ENCODE measurements at regions of chr12 and their contacts with region 1.

Region 1: DNA sequence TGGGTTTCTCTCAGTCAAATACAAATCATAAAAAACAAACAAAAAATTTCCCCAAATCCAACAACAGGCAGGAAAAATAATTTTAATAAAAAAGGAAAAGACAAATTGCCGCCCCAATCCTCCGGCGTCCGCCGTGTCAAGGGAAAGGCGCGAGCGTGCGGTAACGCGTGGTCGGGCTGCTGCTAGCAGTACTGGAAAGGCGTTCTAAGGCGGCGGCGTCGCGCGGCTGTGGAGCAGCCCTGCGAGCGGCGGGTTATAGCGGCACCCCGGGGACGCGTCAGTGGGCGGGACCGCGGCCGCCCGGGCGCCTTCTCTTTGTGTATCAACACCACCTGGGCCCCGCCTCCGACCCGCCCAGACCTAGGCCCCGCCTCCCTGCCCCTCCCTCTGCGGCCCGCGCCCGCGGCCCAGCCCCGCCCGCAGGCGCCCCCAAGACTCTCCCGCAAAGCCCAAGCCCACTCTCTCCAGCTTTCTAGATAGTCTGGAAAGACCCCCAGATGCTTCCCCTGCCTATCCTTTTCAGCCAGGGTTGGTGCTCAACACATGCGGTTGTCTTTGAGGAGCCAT is at the start of gene SLC38A2:
- DNase-seq: peak; percentile 98 to 99
- H3K4me3 ChIP-seq: peak within 1 kb of the TSS; percentile 88 to 99
- H3K27ac ChIP-seq: peak within 1 kb of the TSS; percentile 96
- H3K4me1 ChIP-seq: peaks cover 2 to 40% (median 25%) of the 10 kb centered on the region in 4 donors
- H3K27me3 ChIP-seq: no peaks in the 10 kb centered on the region
- CTCF ChIP-seq: no peak

Region 2: DNA sequence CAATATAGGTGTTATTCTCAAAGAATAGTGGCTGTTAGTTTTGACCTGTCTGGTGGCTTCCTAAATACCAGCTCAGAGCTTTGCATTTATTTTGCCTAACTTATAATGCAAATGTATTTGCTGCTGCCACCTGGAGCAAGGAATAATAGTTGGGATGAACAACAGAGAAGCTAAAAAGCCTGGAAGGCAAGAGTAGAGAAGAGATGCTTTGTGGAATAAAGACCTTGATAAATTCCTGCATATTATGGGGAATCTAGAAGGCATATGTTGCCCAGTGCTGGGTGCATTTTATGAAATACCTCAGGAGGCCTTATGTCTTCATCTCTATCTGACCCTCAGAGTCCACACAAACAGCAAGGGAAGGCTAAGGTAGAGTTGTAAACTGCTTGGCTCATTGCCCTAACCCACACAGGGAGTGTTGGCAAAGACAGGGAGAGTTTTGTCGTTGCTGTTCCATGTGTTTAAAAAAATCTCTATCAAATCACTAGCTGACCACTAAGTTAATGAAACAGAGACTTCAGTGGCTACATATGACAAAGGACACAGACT is 328.6 kb before region 1 on chr12:
- intact Hi-C with region 1: no loop called
- DNase-seq: no peak
- H3K4me3 ChIP-seq: no peak overlapping the region
- H3K27ac ChIP-seq: no peak overlapping the region
- H3K4me1 ChIP-seq: no peaks in the 10 kb centered on the region
- H3K27me3 ChIP-seq: no peaks in the 10 kb centered on the region
- CTCF ChIP-seq: no peak

Region 3: DNA sequence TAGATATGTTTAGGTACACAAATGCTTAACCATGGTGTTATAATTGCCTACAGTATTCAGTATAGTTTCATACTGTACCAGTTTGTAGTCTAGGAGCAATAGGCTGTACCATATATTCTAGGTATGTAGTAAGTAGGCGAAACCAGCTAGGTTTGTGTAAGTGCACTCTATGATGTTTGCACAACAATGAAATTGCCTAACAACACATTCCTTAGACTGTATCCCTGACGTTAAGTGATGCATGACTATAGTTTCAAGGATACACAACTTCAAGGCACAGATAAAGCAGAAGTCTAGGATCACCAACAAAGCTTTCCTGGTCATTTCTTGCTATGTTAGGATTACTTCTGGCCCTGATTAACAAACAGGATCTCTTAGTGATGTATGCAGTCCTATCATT is 238.9 kb before region 1 on chr12:
- intact Hi-C with region 1: no loop called
- DNase-seq: no peak
- H3K4me3 ChIP-seq: no peak overlapping the region
- H3K27ac ChIP-seq: no peak overlapping the region
- H3K4me1 ChIP-seq: peaks cover 0 to 4% (median 0%) of the 10 kb centered on the region in 4 donors
- H3K27me3 ChIP-seq: no peaks in the 10 kb centered on the region
- CTCF ChIP-seq: no peak

Region 4: GRCh38 chr12:46153268-46153872 is 219.3 kb before region 1 on chr12:
- intact Hi-C with region 1: loop called (anchors 10 kb)
- DNase-seq: no peak
- H3K4me3 ChIP-seq: no peak overlapping the region
- H3K27ac ChIP-seq: peak overlapping the region; percentile 2 to 34
- H3K4me1 ChIP-seq: peaks cover 0 to 26% (median 6%) of the 10 kb centered on the region in 4 donors
- H3K27me3 ChIP-seq: no peaks in the 10 kb centered on the region
- CTCF ChIP-seq: peak; percentile 49 to 65

Region 5: DNA sequence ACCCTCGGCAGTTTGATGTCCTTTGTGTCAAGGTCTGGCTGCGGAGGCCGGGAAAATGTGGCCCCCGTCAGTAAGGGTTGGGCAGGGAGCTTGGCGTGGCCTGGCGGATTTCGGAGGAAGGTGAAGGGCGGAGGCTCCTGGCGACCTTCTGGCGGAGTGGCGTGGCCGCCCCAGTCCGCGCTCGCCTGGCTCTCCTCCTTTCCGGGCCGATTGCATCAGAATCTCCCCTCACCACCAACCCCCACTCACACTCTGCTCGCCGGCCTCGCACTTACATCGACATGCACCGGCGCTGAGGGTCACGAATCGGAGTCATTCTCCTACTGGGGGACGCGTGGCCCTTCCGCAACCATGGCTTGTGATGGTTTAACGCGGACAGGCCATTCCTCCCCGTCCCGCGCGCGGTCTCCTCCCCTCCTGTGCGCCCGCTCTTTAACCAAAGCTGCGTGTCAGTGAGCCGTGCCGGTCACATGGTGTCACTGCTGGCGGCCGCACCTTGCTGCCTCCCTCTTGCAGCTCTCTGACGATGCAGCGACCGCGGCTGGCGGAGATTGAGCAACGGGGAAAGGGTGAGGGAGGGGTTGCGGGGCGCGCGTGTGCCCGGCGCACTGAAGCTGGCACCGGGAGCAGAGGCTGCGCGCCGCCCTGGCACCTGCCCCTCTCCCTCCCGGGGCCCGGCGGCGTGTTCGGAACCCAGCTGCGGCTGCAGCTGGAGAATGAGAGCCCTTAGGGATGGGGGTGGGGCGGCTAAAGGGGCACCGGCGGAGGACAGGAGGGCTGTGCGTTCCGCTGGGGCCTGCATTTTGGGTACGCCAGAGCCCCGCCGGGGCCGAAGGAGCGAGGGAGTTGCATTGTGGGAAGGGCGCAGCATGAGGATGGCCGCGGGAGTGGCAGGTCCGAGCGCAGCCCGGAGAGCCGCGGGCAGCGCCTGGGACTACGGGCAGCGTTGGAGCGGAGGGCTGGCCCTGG is 103.8 kb before region 1 on chr12 and contains the start of gene SLC38A1:
- intact Hi-C with region 1: loop called (anchors 5 kb)
- DNase-seq: peak; percentile 86 to 95
- H3K4me3 ChIP-seq: peak within 1 kb of the TSS; percentile 70 to 76
- H3K27ac ChIP-seq: peak within 1 kb of the TSS; percentile 88 to 91
- H3K4me1 ChIP-seq: peaks cover 0 to 33% (median 14%) of the 10 kb centered on the region in 4 donors
- H3K27me3 ChIP-seq: no peaks in the 10 kb centered on the region
- CTCF ChIP-seq: no peak

Region 6: GRCh38 chr12:46342562-46343033 is 30.0 kb before region 1 on chr12:
- intact Hi-C with region 1: no loop called
- DNase-seq: peak in 1 of 2 donors; percentile 63
- H3K4me3 ChIP-seq: no peak overlapping the region
- H3K27ac ChIP-seq: peak overlapping the region; percentile 8 to 49
- H3K4me1 ChIP-seq: peaks cover 0 to 17% (median 9%) of the 10 kb centered on the region in 4 donors
- H3K27me3 ChIP-seq: no peaks in the 10 kb centered on the region
- CTCF ChIP-seq: peak; percentile 48 to 57

Region 7: DNA sequence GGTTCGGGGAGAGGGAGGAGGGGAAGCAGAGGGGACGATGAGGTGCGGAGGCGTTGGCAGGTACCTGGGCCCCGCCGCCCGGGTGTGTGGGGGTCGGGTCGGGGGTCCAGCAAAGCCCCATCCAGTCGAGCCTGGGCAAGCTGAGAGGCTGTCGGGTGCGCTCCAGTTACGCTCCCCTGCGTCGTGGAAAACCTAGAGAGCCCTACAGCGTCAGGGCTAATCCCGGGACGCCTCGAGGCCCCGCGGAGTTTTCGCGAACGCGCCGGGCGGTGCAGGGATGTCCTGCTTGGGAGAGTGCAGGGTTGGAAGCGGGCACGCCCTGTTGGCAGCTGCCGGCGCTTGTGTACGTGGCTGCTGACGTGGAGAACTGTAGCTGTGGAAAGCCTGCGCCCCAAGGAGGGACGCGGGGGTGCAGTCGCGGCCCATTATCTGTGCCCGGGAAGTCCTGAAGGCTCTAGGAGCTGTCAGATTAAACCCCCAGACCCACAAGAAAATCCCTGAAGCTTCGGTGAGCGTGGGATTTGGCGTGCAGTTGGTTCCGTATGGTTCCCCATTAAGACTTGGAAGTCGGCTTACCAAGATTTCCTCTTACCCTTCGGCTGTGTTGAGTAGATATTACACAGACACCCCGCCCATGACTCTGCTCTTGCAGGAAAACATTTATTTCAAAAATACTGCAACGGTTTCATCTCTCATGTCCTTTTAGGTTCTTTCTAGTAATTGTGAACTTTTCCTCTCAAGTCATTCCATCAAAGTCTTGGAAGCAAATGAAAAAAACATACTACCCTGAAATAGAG is 11.2 kb after region 1 on chr12:
- intact Hi-C with region 1: loop called (anchors 2 kb)
- DNase-seq: peak; percentile 94 to 97
- H3K4me3 ChIP-seq: peak overlapping the region; percentile 79 to 84
- H3K27ac ChIP-seq: peak overlapping the region; percentile 98 to 99
- H3K4me1 ChIP-seq: peaks cover 0 to 62% (median 49%) of the 10 kb centered on the region in 4 donors
- H3K27me3 ChIP-seq: no peaks in the 10 kb centered on the region
- CTCF ChIP-seq: no peak

Region 8: GRCh38 chr12:46507766-46508165 is 135.1 kb after region 1 on chr12:
- intact Hi-C with region 1: no loop called
- DNase-seq: no peak
- H3K4me3 ChIP-seq: no peak overlapping the region
- H3K27ac ChIP-seq: no peak overlapping the region
- H3K4me1 ChIP-seq: no peaks in the 10 kb centered on the region
- H3K27me3 ChIP-seq: no peaks in the 10 kb centered on the region
- CTCF ChIP-seq: no peak

Region 9: DNA sequence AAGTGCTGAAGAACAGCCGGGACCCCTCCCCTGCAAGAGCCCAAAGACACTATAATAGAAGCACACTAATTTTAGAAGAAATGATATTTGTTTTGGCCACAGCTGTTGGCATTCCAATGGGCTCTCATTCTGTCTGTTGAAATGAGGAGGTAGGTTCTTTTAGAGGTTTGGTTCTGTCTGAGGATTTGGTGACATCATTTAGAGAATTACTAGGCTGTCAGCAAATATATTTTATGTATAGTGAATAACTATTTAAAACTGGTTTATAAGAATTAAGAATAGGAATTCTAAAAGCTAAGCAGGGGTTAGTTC is 200.7 kb after region 1 on chr12:
- intact Hi-C with region 1: loop called (anchors 10 kb)
- DNase-seq: no peak
- H3K4me3 ChIP-seq: no peak overlapping the region
- H3K27ac ChIP-seq: peak overlapping the region; percentile 28 to 45
- H3K4me1 ChIP-seq: peaks cover 0 to 52% (median 23%) of the 10 kb centered on the region in 4 donors
- H3K27me3 ChIP-seq: no peaks in the 10 kb centered on the region
- CTCF ChIP-seq: no peak

Region 10: DNA sequence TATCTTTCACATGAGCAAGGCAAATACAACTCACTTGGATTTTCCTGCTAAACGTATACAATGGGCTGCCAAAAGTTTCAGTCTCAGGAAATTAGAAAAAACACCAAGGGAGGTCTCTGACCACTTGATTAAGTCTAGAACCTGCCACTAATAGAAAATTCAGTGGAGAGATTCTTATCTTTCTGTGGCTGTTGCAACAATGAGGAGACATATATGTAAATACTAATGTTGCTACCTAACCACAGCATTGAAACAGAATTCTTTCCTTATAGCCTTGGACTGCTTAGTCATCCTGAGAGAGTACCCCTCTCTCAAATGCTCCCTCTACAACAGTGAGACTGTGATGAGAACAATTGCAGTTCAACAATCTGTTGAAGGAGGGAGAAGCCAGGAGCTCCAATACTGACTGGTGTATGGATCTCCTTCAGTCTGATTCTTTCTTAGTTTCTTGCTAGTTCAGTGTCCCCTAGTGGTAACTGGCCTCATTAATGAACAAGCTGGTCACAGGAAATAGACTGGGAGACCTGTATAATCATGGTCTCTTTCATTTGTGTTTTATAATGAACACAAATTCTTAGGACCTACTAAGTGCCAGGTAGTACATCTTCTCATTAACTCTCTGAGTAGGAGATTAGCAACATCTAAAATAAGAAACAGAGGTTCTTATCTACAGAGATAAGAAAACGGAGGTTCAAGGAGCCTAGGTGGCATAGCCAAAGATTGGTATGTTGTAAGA is 288.7 kb after region 1 on chr12:
- intact Hi-C with region 1: loop called (anchors 5 kb)
- DNase-seq: peak in 1 of 2 donors; percentile 29
- H3K4me3 ChIP-seq: no peak overlapping the region
- H3K27ac ChIP-seq: peak overlapping the region; percentile 62 to 67
- H3K4me1 ChIP-seq: peaks cover 0 to 51% (median 43%) of the 10 kb centered on the region in 4 donors
- H3K27me3 ChIP-seq: no peaks in the 10 kb centered on the region
- CTCF ChIP-seq: peak; percentile 84 to 87

Measured in tibial artery (tissue), 4 donors.